Activated naive CD4-positive, alpha-beta T cell treated with anti-CD3 and anti-CD28 coated beads for 36 hours (primary cell): ENCODE measurements at regions of chr6 and their contacts with region 1.

Region 1: DNA sequence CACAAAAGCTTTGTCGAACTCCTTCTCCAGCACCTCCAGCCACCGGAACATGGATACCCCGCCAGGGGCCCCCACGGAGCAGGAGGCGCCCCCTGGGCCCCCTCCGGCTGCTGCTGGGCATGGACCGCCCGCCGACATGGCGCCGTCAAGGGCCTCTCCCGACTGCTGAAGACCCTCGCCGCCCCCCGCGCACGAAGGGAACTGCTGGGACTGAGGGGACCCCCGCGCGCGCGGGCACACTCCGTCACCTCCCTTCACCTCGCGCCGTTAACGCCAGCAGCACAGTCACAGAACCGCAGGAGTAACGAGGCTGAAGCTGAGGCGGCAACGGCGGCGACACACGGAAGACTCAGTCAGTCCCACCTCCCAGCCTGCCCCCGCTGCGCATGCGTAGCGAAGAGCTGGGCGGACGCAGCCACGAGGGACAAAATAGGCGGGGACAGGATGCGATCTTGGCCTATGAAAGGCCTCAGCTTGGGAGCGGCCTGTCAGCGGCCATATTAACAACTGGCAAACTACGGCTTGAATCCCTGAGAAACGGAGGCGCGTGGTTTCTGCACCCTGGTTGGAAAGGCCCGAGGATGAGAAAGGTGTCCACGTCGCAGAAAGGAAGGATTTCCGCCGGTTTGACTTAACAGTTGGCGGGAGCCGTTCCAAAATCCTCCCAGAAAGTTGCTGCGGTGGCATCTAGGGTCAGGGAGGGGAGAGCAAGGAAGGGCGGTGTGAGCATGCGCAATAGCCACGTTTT is at the start of gene GOPC:
- DNase-seq: peak; percentile 96
- H3K4me3 Mint-ChIP-seq: peak within 1 kb of the TSS; percentile 99
- H3K27ac Mint-ChIP-seq: peak within 1 kb of the TSS; percentile 98
- H3K4me1 Mint-ChIP-seq: peaks cover 33% of the 10 kb centered on the region
- H3K27me3 Mint-ChIP-seq: no peaks in the 10 kb centered on the region
- total RNA-seq, gene GOPC: 7.2 to 7.5 TPM

Region 2: DNA sequence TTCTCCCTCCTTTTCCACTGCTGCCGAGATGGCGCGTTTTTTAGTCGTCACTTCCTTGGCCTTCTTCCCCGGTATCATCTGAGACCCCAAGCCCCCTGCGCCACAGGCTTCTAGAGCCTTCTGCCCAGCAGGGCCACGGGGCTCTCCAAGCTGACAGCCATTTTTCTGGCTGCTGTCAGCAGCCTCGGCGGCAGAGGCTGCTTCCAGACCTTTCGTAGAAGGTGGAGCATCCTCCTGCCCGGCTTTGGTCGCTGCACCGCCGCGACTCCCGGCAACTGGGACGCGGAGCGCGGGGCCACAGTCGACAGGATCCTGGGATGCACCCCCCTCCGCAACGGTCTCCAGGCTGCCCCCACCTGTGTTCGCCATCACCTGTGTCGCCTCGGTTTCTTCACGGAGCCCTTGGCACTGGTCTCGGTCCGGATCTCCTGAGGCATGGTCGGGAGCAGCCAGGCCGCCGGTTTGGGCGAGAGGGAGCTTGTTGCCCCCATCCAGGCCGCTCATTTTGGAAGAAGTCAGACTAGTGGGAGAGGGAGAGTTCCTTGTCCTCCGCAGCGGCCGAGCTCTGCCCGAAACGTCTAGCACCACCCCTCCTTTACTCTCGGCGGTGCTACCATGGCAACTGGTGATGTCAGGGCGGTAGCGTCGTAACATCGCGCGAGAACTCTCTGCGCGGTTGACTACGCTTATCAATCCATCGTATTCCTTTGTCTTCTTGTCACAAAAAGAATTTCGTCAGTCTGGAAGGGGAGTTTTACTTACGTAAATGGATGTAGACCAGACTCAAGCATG is 1348.6 kb before region 1 on chr6 and contains the start of gene TSPYL4:
- CTCF ChIA-PET with region 1: no interaction called
- intact Hi-C with region 1: loop called (anchors 5 kb)
- DNase-seq: peak; percentile 95
- H3K4me3 Mint-ChIP-seq: no peak within 1 kb of the TSS
- H3K27ac Mint-ChIP-seq: no peak within 1 kb of the TSS
- H3K4me1 Mint-ChIP-seq: peaks cover 35% of the 10 kb centered on the region
- H3K27me3 Mint-ChIP-seq: no peaks in the 10 kb centered on the region
- total RNA-seq, gene TSPYL4: 7.8 to 8.0 TPM

Region 3: GRCh38 chr6:116680975-116681808 is 921.1 kb before region 1 on chr6 and contains the start of gene KPNA5:
- CTCF ChIA-PET with region 1: no interaction called
- intact Hi-C with region 1: loop called (anchors 5 kb)
- DNase-seq: peak; percentile 94
- H3K4me3 Mint-ChIP-seq: peak within 1 kb of the TSS; percentile 96
- H3K27ac Mint-ChIP-seq: peak within 1 kb of the TSS; percentile 97
- H3K4me1 Mint-ChIP-seq: peaks cover 43% of the 10 kb centered on the region
- H3K27me3 Mint-ChIP-seq: no peaks in the 10 kb centered on the region
- total RNA-seq, gene KPNA5: 8.4 to 8.9 TPM

Region 4: GRCh38 chr6:117404548-117404947 is 197.8 kb before region 1 on chr6:
- CTCF ChIA-PET with region 1: no interaction called
- intact Hi-C with region 1: loop called (anchors 2 kb)
- DNase-seq: no peak
- H3K4me3 Mint-ChIP-seq: no peak overlapping the region
- H3K27ac Mint-ChIP-seq: no peak overlapping the region
- H3K4me1 Mint-ChIP-seq: no peaks in the 10 kb centered on the region
- H3K27me3 Mint-ChIP-seq: peaks cover 5% of the 10 kb centered on the region

Region 5: GRCh38 chr6:117547688-117548621 is 54.4 kb before region 1 on chr6:
- CTCF ChIA-PET with region 1: interaction called, 4 read pairs
- intact Hi-C with region 1: loop called (anchors 1 kb)
- DNase-seq: peak; percentile 52
- H3K4me3 Mint-ChIP-seq: peak overlapping the region; percentile 67
- H3K27ac Mint-ChIP-seq: no peak overlapping the region
- H3K4me1 Mint-ChIP-seq: peaks cover 37% of the 10 kb centered on the region
- H3K27me3 Mint-ChIP-seq: peaks cover 6% of the 10 kb centered on the region

Region 6: DNA sequence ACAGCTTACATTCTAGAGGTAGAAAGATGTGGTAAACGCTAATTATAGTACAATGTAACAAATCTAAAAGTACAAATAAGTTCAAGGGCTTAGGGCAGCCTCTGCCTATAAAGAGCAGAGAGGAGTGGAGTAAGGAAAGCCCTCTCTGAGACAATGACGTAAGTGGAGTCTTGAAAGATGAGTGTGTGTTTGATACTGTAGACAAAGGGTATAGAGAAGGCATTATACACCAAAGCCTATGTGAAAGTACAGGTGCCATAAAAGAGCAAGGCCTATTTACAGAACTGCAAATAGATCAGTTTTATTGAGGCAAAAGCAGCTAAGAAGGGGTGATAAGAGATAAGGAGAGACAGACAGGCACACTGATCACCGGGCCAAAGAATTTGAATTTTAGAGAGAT is 10.9 kb before region 1 on chr6:
- CTCF ChIA-PET with region 1: interaction called, 3 read pairs
- intact Hi-C with region 1: loop called (anchors 1 kb)
- DNase-seq: no peak
- H3K4me3 Mint-ChIP-seq: no peak overlapping the region
- H3K27ac Mint-ChIP-seq: no peak overlapping the region
- H3K4me1 Mint-ChIP-seq: peaks cover 30% of the 10 kb centered on the region
- H3K27me3 Mint-ChIP-seq: no peaks in the 10 kb centered on the region

Region 7: GRCh38 chr6:119078376-119079282 is 1476.3 kb after region 1 on chr6 and contains the start of gene FAM184A:
- CTCF ChIA-PET with region 1: no interaction called
- intact Hi-C with region 1: loop called (anchors 5 kb)
- DNase-seq: peak; percentile 74
- H3K4me3 Mint-ChIP-seq: peak within 1 kb of the TSS; percentile 86
- H3K27ac Mint-ChIP-seq: peak within 1 kb of the TSS; percentile 96
- H3K4me1 Mint-ChIP-seq: peaks cover 42% of the 10 kb centered on the region
- H3K27me3 Mint-ChIP-seq: no peaks in the 10 kb centered on the region
- total RNA-seq, gene FAM184A: 13.5 to 14.0 TPM